HepG2 (cell line): ENCODE measurements at regions of chr6 and their contacts with region 1.

Region 1: GRCh38 chr6:162727309-162728182 is at the starts of genes PACRG and PRKN:
- DNase-seq: peak; percentile 98
- ATAC-seq: peak; percentile 98
- H3K4me3 ChIP-seq: peak within 1 kb of the TSS; percentile 70 to 80 (median 74)
- H3K27ac ChIP-seq: peak within 1 kb of the TSS; percentile 4
- H3K4me1 ChIP-seq: peaks cover 14% of the 10 kb centered on the region
- H3K27me3 ChIP-seq: no peaks in the 10 kb centered on the region
- CTCF ChIP-seq: peak; percentile 35; the same call in 1 of the 2 replicates
- EP300 ChIP-seq: peak; percentile 58 to 66; a peak in 3 of 4 replicates
- POLR2A ChIP-seq: peak; percentile 66 to 76; a peak in 3 of 4 replicates
- RAD21 ChIP-seq: no peak; the same call in none of the 2 replicates
- total RNA-seq, gene PACRG: 0.13 TPM in 1 of 2 replicates, not detected in the other
- total RNA-seq, gene PRKN: 0.18 and 0.31 TPM in 2 replicates

Region 2: GRCh38 chr6:161748535-161749416 is 978.8 kb before region 1 on chr6:
- CTCF ChIA-PET with region 1: no interaction called
- POLR2A ChIA-PET with region 1: no interaction called
- in situ Hi-C with region 1: no loop called
- intact Hi-C with region 1: loop called (anchors 10 kb)
- DNase-seq: peak; percentile 28
- ATAC-seq: peak; percentile 89
- H3K4me3 ChIP-seq: no peak overlapping the region
- H3K27ac ChIP-seq: no peak overlapping the region
- H3K4me1 ChIP-seq: no peaks in the 10 kb centered on the region
- H3K27me3 ChIP-seq: no peaks in the 10 kb centered on the region
- CTCF ChIP-seq: peak; percentile 74
- EP300 ChIP-seq: no peak
- POLR2A ChIP-seq: no peak
- RAD21 ChIP-seq: no peak

Region 3: DNA sequence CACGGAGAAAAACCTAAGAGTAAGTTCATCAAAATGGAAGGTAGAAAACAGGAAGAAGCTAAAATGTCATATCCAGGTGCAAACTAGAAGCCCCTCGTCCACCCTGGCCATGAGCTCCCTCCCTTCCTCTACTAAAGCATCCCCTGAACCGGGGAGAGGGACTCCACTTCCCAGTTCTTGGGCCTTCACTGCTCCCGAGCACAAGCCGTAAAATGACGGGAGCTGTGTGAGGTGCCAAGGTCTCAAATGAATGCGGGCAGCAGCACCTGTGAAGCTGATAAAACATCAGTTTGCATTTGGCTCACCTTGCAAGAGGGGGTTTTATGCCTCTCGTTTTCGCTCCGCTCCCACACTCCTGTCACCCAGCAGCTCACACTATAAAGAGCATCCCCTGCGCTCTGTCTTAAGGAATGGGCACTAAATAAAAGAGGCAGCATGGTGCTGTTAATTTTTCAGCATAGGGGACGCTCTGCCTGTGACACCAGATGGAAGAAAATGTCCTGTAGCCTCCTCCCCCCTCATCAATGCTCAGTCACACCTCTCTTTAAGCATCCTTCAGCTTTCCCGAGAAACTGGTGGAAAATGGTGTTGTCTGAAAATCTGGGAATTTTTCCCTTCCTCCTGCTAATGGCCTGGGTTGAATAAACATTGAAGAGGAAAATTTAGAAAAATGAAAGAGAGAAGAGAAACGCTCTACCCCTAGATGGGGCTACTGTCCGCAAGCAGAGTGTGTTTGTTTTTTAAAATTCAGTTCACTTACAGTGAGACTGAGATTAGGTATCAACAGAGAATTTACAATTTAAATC is 890.7 kb before region 1 on chr6:
- CTCF ChIA-PET with region 1: no interaction called
- POLR2A ChIA-PET with region 1: no interaction called
- in situ Hi-C with region 1: loop called (anchors 25 kb)
- intact Hi-C with region 1: no loop called
- DNase-seq: peak; percentile 35
- ATAC-seq: no peak
- H3K4me3 ChIP-seq: no peak overlapping the region
- H3K27ac ChIP-seq: no peak overlapping the region
- H3K4me1 ChIP-seq: peaks cover 23% of the 10 kb centered on the region
- H3K27me3 ChIP-seq: peaks cover 0 to 6% of the 10 kb centered on the region in 2 experiments; a peak in 2 of 5 replicates
- CTCF ChIP-seq: peak; percentile 56
- EP300 ChIP-seq: no peak
- POLR2A ChIP-seq: no peak
- RAD21 ChIP-seq: peak; percentile 56; the same call in 1 of the 2 replicates

Region 4: GRCh38 chr6:162251257-162251656 is 476.3 kb before region 1 on chr6:
- CTCF ChIA-PET with region 1: no interaction called
- POLR2A ChIA-PET with region 1: no interaction called
- in situ Hi-C with region 1: no loop called
- intact Hi-C with region 1: loop called (anchors 10 kb)
- DNase-seq: peak; percentile 14
- ATAC-seq: peak; percentile 73
- H3K4me3 ChIP-seq: no peak overlapping the region
- H3K27ac ChIP-seq: no peak overlapping the region
- H3K4me1 ChIP-seq: peaks cover 21% of the 10 kb centered on the region
- H3K27me3 ChIP-seq: no peaks in the 10 kb centered on the region
- CTCF ChIP-seq: 0 out of 2 replicates have a peak, but pooled peaks have one; percentile 29
- EP300 ChIP-seq: no peak
- POLR2A ChIP-seq: no peak
- RAD21 ChIP-seq: no peak

Region 5: DNA sequence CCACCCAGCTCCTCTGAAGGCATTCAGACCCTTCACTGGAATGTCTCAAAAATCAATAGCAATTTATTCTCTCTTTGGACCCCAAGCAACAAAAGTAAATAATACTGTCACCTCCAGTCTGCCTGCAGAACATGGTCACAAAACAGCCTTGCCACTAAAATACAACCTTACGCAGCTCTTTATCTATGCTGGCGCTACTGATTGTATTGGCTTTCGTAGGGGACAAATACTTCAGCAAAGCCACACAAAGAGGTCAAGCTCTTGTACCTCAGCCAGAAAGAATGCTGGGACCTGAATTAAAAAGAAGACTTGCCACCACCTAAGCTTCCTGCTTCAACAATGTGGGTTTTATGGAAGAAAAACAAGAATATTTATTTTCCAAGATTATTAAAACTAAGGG is 57.2 kb before region 1 on chr6:
- CTCF ChIA-PET with region 1: no interaction called
- POLR2A ChIA-PET with region 1: no interaction called
- in situ Hi-C with region 1: no loop called
- intact Hi-C with region 1: no loop called
- DNase-seq: no peak
- ATAC-seq: no peak
- H3K4me3 ChIP-seq: no peak overlapping the region
- H3K27ac ChIP-seq: no peak overlapping the region
- H3K4me1 ChIP-seq: no peaks in the 10 kb centered on the region
- H3K27me3 ChIP-seq: no peaks in the 10 kb centered on the region
- CTCF ChIP-seq: no peak
- EP300 ChIP-seq: no peak
- POLR2A ChIP-seq: no peak
- RAD21 ChIP-seq: no peak

Region 6: DNA sequence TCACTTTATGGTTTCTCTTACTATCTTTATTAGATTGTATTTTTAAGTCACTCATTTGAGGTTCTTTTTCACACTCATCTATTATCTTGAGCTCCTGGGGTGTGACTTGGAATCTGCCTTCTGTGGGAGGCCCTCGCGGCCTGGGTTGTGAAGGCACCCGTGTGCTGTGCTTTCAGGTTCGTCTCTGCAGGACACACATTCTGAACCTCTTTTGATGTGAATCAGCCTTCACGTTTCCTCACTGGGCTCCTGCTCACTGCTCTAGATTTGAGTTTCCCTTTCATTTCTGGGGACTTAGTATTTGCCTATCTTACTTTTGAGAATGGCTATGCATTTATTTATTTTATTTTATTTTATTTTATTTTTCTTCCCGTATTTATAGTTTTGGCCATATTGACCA is 98.1 kb after region 1 on chr6:
- CTCF ChIA-PET with region 1: no interaction called
- POLR2A ChIA-PET with region 1: no interaction called
- in situ Hi-C with region 1: no loop called
- intact Hi-C with region 1: no loop called
- DNase-seq: no peak
- ATAC-seq: no peak
- H3K4me3 ChIP-seq: no peak overlapping the region
- H3K27ac ChIP-seq: no peak overlapping the region
- H3K4me1 ChIP-seq: no peaks in the 10 kb centered on the region
- H3K27me3 ChIP-seq: no peaks in the 10 kb centered on the region
- CTCF ChIP-seq: no peak
- EP300 ChIP-seq: no peak
- POLR2A ChIP-seq: no peak
- RAD21 ChIP-seq: no peak

Region 7: GRCh38 chr6:164151161-164151728 is 1423.7 kb after region 1 on chr6:
- CTCF ChIA-PET with region 1: no interaction called
- POLR2A ChIA-PET with region 1: no interaction called
- in situ Hi-C with region 1: no loop called
- intact Hi-C with region 1: no loop called
- DNase-seq: no peak
- ATAC-seq: no peak
- H3K4me3 ChIP-seq: no peak overlapping the region
- H3K27ac ChIP-seq: no peak overlapping the region
- H3K4me1 ChIP-seq: no peaks in the 10 kb centered on the region
- H3K27me3 ChIP-seq: no peaks in the 10 kb centered on the region; a peak in 1 of 5 replicates
- CTCF ChIP-seq: no peak
- EP300 ChIP-seq: no peak
- POLR2A ChIP-seq: no peak
- RAD21 ChIP-seq: no peak